MCF 10A (cell line): ENCODE measurements at regions of chr9 and their contacts with region 1.

Region 1: GRCh38 chr9:137240861-137241489 is at the start of gene TUBB4B:
- DNase-seq: peak; percentile 100
- H3K4me3 Mint-ChIP-seq: peak within 1 kb of the TSS; percentile 80
- H3K27ac Mint-ChIP-seq: peak within 1 kb of the TSS; percentile 94
- H3K4me1 Mint-ChIP-seq: peaks cover 15% of the 10 kb centered on the region
- H3K27me3 Mint-ChIP-seq: no peaks in the 10 kb centered on the region
- CTCF ChIP-seq: no peak
- total RNA-seq, gene TUBB4B: 171 and 180 TPM in 2 replicates

Region 2: GRCh38 chr9:137129456-137130175 is 111.4 kb before region 1 on chr9:
- CTCF ChIA-PET with region 1: interaction called, 8 read pairs
- POLR2A ChIA-PET with region 1: interaction called, 30 read pairs
- intact Hi-C with region 1: no loop called
- DNase-seq: peak; percentile 91
- H3K4me3 Mint-ChIP-seq: peak overlapping the region; percentile 77
- H3K27ac Mint-ChIP-seq: no peak overlapping the region
- H3K4me1 Mint-ChIP-seq: peaks cover 18% of the 10 kb centered on the region
- H3K27me3 Mint-ChIP-seq: no peaks in the 10 kb centered on the region
- CTCF ChIP-seq: no peak

Region 3: GRCh38 chr9:137200311-137201204 is 40.4 kb before region 1 on chr9 and contains the start of gene TPRN:
- CTCF ChIA-PET with region 1: interaction called, 4 read pairs
- POLR2A ChIA-PET with region 1: interaction called, 15 read pairs
- intact Hi-C with region 1: no loop called
- DNase-seq: peak; percentile 100
- H3K4me3 Mint-ChIP-seq: peak within 1 kb of the TSS; percentile 76
- H3K27ac Mint-ChIP-seq: no peak within 1 kb of the TSS
- H3K4me1 Mint-ChIP-seq: peaks cover 12% of the 10 kb centered on the region
- H3K27me3 Mint-ChIP-seq: no peaks in the 10 kb centered on the region
- CTCF ChIP-seq: no peak
- total RNA-seq, gene TPRN: 12.6 and 13.4 TPM in 2 replicates

Region 4: DNA sequence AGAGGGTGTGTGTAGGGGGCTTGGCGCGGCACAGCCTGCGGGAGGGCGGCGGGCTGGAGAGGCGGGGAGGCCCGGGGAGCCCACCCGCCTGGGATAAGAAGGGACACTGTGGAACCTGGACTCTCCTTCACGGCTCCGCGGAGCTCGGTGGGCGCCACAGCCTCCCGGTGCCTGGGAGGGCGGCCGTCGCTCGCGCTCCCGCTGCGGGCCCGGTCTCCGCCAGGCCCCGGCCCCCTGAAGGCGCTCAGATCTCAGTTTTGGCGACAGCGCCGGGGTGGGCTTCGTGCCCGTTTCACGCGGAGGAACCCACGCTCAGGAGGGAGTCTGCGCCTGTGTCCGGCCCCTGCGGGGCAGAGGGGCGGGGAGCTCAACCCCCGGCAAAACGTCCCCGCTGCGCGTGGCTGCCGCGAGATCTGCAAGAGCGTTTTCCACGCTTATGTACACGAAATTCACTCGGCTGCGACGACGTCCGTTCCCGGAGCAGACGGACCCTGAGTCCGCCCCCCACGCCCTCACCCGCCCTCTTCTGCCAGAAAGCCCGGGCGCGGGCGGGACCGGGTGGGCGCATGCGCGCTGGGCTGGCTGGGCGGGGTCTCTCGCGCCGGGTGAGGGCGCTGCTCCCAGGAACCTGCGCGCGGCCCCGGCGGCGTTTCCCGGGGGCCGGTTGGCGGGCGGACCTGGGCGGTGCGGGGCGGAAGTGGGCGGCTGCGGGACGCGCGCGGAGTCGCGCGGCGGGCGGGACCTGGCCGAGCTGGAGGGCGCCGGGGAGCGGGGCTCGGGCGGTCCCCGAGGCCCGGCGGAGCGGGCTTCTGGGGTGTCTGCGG is 13.9 kb after region 1 on chr9 and contains the start of gene NELFB:
- CTCF ChIA-PET with region 1: interaction called, 13 read pairs
- POLR2A ChIA-PET with region 1: interaction called, 118 read pairs
- intact Hi-C with region 1: no loop called
- DNase-seq: peak; percentile 86
- H3K4me3 Mint-ChIP-seq: peak within 1 kb of the TSS; percentile 82
- H3K27ac Mint-ChIP-seq: peak within 1 kb of the TSS; percentile 77
- H3K4me1 Mint-ChIP-seq: no peaks in the 10 kb centered on the region
- H3K27me3 Mint-ChIP-seq: no peaks in the 10 kb centered on the region
- CTCF ChIP-seq: no peak
- total RNA-seq, gene NELFB: 38.0 and 40.5 TPM in 2 replicates